PC-9 (cell line): ENCODE measurements at regions of chrX and their contacts with region 1.

Region 1: GRCh38 chrX:2875798-2876399 is 47.2 kb downstream of the GYG2 start:
- DNase-seq: no peak
- H3K4me3 ChIP-seq: no peak overlapping the region
- H3K27ac ChIP-seq: no peak overlapping the region
- H3K4me1 ChIP-seq: no peaks in the 10 kb centered on the region
- H3K27me3 ChIP-seq: peaks cover 12% of the 10 kb centered on the region; the same call in 1 of the 2 replicates
- CTCF ChIP-seq: peak; percentile 78

Region 2: DNA sequence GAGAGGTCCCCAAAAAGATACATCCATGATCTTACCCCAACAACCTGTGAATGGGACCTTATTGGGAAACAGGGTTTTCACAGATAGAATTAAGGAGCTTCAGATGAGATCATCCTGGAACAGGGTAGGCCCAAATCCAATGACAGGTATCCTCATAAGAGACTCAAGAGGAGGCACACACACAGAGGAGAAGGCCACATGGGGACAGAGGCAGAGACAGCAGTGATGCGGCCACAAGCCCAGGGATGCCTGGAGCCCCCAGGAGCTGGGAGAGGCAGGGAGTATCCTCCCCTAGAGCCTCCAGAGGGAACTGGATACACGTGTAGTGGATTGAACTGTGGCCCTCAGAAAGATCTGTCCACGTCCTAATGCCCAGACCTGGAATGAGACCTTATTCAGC is 755.3 kb after region 1 on chrX:
- CTCF ChIA-PET with region 1: interaction called, 11 read pairs
- POLR2A ChIA-PET with region 1: no interaction called
- intact Hi-C with region 1: loop called (anchors 10 kb)
- DNase-seq: no peak
- H3K4me3 ChIP-seq: no peak overlapping the region
- H3K27ac ChIP-seq: no peak overlapping the region
- H3K4me1 ChIP-seq: no peaks in the 10 kb centered on the region
- H3K27me3 ChIP-seq: no peaks in the 10 kb centered on the region
- CTCF ChIP-seq: no peak

Region 3: GRCh38 chrX:3638280-3638873 is 762.5 kb after region 1 on chrX:
- CTCF ChIA-PET with region 1: no interaction called
- POLR2A ChIA-PET with region 1: no interaction called
- intact Hi-C with region 1: loop called (anchors 10 kb)
- DNase-seq: peak; percentile 11 to 39
- H3K4me3 ChIP-seq: no peak overlapping the region
- H3K27ac ChIP-seq: no peak overlapping the region
- H3K4me1 ChIP-seq: no peaks in the 10 kb centered on the region
- H3K27me3 ChIP-seq: no peaks in the 10 kb centered on the region
- CTCF ChIP-seq: peak; percentile 89

Region 4: DNA sequence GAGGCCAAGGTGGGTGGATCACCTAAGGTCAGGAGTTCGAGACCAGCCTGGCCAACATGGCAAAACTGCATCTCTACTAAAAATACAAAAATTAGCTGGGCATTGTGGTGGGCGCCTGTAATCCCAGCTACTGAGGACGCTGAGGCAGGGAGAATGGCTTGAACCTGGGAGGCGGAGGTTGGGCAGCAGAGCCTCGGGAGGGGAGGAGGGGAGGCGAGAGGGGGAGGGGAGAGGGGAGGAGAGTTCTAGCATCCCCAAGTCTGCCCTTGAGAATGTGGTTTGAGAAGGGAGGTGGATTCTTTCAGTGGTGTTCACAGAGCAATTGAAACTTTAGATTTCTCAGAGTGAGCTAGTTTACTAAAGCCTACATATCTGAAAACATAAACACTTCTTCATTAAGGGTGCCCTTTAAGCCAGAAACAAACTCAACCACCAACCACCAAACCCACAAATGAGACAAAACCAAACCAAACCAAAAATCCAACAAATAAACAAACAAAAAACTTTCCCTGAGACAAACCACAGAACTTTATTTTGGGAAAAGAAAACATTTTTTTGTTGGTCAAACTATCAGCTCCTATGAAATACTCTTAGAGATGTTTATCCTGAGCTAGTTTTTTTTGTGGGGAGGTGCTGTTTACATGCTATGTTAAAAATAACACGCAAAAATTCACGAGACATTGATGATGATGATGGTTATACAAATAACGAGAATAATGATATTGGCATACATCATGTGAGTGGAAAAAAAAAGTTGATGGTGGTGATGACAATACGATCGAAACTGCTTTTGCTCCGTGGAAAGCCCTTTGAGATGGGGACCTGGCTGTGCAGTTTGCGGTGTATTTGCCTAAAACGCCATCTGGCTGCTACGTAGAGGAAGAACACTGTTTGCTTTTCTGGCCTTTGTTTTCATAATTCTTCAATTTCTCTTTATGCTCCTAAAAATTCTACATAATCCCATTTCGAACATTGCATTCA is 935.7 kb after region 1 on chrX:
- CTCF ChIA-PET with region 1: interaction called, 12 read pairs
- POLR2A ChIA-PET with region 1: no interaction called
- intact Hi-C with region 1: no loop called
- DNase-seq: peak in 1 of 2 experiments; percentile 32
- H3K4me3 ChIP-seq: no peak overlapping the region
- H3K27ac ChIP-seq: no peak overlapping the region
- H3K4me1 ChIP-seq: peaks cover 9% of the 10 kb centered on the region
- H3K27me3 ChIP-seq: peaks cover 12% of the 10 kb centered on the region
- CTCF ChIP-seq: peak; percentile 63